ENCODE measurements at regions of chr7 and their contacts with region 1.

Region 1: GRCh38 chr7:130010689-130011412 is 40.3 kb downstream of the ZC3HC1 start:
- DNase-seq: peak; percentile 97
- ATAC-seq: peak; percentile 93
- H3K4me3 Mint-ChIP-seq: no peak overlapping the region
- H3K27ac Mint-ChIP-seq: peak overlapping the region; percentile 51
- H3K4me1 Mint-ChIP-seq: peaks cover 10% of the 10 kb centered on the region
- H3K27me3 Mint-ChIP-seq: no peaks in the 10 kb centered on the region
- CTCF ChIP-seq: peak; percentile 81

Region 2: DNA sequence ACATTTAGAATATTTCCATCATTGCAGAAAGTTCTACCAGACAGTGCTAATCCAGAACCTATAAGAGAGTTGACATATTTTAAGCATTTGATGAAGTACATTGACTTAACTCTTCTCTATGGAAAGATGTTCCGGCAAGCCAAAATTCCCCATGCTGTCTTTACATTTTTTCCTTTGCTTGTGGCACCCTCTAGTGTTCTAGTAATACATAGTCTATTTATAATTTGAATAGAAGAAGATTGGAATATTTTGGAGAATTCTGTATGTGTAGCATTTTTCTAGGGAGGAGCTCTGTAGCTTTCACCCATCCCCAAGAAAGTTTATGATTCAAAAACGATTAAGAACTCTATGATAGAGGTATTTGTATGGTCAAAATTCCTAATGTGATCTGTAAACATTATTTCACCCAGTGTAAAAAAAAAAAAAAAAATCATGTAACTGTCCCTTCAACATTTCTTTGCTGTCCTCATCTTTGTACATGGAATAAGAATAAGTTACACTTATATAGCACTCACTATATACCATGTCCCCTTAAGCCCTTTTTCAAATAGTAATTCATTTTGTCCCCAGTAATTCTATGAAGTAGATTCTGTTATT is 366.1 kb before region 1 on chr7:
- CTCF ChIA-PET with region 1: no interaction called
- POLR2A ChIA-PET with region 1: no interaction called
- intact Hi-C with region 1: loop called (anchors 10 kb)
- DNase-seq: no peak
- ATAC-seq: no peak
- H3K4me3 Mint-ChIP-seq: no peak overlapping the region
- H3K27ac Mint-ChIP-seq: no peak overlapping the region
- H3K4me1 Mint-ChIP-seq: peaks cover 35% of the 10 kb centered on the region
- H3K27me3 Mint-ChIP-seq: no peaks in the 10 kb centered on the region
- CTCF ChIP-seq: peak; percentile 58

Region 3: DNA sequence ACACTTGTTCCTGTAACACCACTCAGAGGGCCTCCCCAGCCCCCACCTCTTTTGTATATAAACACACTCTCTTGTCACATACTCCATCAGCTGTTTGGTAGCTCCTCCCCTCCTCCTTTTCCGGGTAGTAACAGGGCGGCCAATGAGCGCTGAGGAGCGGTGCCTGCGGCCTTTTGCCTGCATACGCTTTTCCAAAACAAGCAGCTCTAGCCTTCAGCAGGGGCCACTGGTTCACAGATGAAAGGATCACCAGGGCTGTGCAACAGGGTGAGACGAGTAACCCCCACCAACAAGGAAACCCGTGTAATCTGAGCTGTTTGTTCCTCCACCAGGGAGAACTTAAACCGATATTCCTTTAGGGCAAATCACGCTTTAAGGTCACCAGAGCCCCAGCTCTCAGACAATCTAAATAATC is 62.0 kb before region 1 on chr7:
- CTCF ChIA-PET with region 1: interaction called, 7 read pairs
- POLR2A ChIA-PET with region 1: no interaction called
- intact Hi-C with region 1: loop called (anchors 5 kb)
- DNase-seq: peak; percentile 93
- ATAC-seq: peak; percentile 64
- H3K4me3 Mint-ChIP-seq: no peak overlapping the region
- H3K27ac Mint-ChIP-seq: no peak overlapping the region
- H3K4me1 Mint-ChIP-seq: peaks cover 28% of the 10 kb centered on the region
- H3K27me3 Mint-ChIP-seq: no peaks in the 10 kb centered on the region
- CTCF ChIP-seq: no peak

Region 4: DNA sequence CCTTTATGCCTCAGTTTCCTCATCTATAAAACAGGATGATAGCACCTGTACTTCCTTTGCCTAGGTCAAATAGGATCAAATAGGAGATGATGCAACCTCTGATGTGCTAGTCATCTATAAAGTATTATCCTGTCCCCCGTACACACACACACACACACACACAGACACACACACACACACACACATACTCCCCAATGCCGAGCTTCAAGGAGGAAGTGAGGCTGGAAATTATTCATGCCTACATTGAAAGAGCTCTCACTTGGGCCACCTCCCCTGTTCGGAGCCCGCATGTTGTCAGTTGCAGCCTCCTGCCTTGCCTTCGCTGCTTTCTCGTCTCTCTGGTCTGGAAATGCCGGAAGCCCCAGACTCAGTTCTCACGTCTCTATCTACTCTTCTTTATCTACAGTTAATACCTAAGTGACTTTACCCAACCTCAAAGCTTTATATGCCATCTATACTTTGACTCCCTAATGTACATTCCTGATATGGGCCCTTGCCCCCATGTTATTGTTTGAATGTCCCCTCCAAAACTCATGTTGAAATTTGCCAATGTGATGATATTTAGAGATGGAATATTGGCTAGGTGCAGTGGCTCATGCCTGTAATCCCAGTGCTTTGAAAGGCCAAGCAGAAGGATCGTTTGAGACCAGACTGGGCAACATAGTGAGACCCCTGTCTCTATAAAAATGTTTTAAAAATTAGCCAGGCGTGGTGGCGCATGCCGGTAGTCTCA is 51.2 kb before region 1 on chr7:
- CTCF ChIA-PET with region 1: no interaction called
- POLR2A ChIA-PET with region 1: no interaction called
- intact Hi-C with region 1: no loop called
- DNase-seq: no peak
- ATAC-seq: no peak
- H3K4me3 Mint-ChIP-seq: no peak overlapping the region
- H3K27ac Mint-ChIP-seq: no peak overlapping the region
- H3K4me1 Mint-ChIP-seq: peaks cover 4% of the 10 kb centered on the region
- H3K27me3 Mint-ChIP-seq: no peaks in the 10 kb centered on the region
- CTCF ChIP-seq: no peak

Region 5: GRCh38 chr7:130084037-130084875 is 73.4 kb after region 1 on chr7:
- CTCF ChIA-PET with region 1: no interaction called
- POLR2A ChIA-PET with region 1: no interaction called
- intact Hi-C with region 1: no loop called
- DNase-seq: no peak
- ATAC-seq: peak; percentile 55
- H3K4me3 Mint-ChIP-seq: no peak overlapping the region
- H3K27ac Mint-ChIP-seq: no peak overlapping the region
- H3K4me1 Mint-ChIP-seq: peaks cover 22% of the 10 kb centered on the region
- H3K27me3 Mint-ChIP-seq: no peaks in the 10 kb centered on the region
- CTCF ChIP-seq: peak; percentile 73

Region 6: GRCh38 chr7:130875265-130875741 is 864.5 kb after region 1 on chr7:
- CTCF ChIA-PET with region 1: no interaction called
- POLR2A ChIA-PET with region 1: no interaction called
- intact Hi-C with region 1: no loop called
- DNase-seq: peak; percentile 67
- ATAC-seq: peak; percentile 61
- H3K4me3 Mint-ChIP-seq: no peak overlapping the region
- H3K27ac Mint-ChIP-seq: peak overlapping the region; percentile 30
- H3K4me1 Mint-ChIP-seq: peaks cover 25% of the 10 kb centered on the region
- H3K27me3 Mint-ChIP-seq: no peaks in the 10 kb centered on the region
- CTCF ChIP-seq: peak; percentile 79

Measured in activated CD8-positive, alpha-beta T cell treated with anti-CD3 and anti-CD28 coated beads for 36 hours (primary cell).